MCF 10A (cell line): ENCODE measurements at regions of chr7 and their contacts with region 1.

Region 1: DNA sequence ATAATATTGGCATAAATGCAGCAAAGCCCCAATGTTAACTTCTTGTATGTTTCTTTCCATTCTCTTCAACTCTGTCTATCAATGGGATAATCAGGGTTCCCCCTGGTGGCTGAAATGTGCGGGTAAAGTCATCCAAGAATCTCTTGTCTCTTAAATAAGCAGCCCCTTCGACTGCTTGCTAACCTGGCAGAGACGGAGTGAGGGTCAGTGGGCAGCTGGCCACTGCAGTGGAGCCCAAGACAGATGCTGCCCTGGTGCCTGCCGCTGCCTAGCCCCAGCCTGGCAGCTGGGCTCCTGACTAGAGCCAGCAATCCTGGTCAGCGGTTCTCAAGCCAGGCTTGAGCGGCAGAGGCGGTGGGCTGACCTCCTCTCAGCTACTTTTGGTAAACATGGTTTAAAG is 248.9 kb downstream of the COBL start:
- DNase-seq: peak; percentile 75
- H3K4me3 Mint-ChIP-seq: no peak overlapping the region
- H3K27ac Mint-ChIP-seq: no peak overlapping the region
- H3K4me1 Mint-ChIP-seq: peaks cover 11% of the 10 kb centered on the region
- H3K27me3 Mint-ChIP-seq: no peaks in the 10 kb centered on the region
- CTCF ChIP-seq: peak; percentile 52

Region 2: GRCh38 chr7:50293509-50294179 is 774.1 kb before region 1 on chr7:
- CTCF ChIA-PET with region 1: no interaction called
- POLR2A ChIA-PET with region 1: no interaction called
- intact Hi-C with region 1: no loop called
- DNase-seq: no peak
- H3K4me3 Mint-ChIP-seq: no peak overlapping the region
- H3K27ac Mint-ChIP-seq: no peak overlapping the region
- H3K4me1 Mint-ChIP-seq: no peaks in the 10 kb centered on the region
- H3K27me3 Mint-ChIP-seq: peaks cover 58% of the 10 kb centered on the region
- CTCF ChIP-seq: no peak

Region 3: GRCh38 chr7:50782384-50783208 is 285.2 kb before region 1 on chr7 and contains the start of gene GRB10:
- CTCF ChIA-PET with region 1: interaction called, 4 read pairs
- POLR2A ChIA-PET with region 1: no interaction called
- intact Hi-C with region 1: loop called (anchors 2 kb)
- DNase-seq: no peak
- H3K4me3 Mint-ChIP-seq: peak within 1 kb of the TSS; percentile 20
- H3K27ac Mint-ChIP-seq: no peak within 1 kb of the TSS
- H3K4me1 Mint-ChIP-seq: peaks cover 9% of the 10 kb centered on the region
- H3K27me3 Mint-ChIP-seq: no peaks in the 10 kb centered on the region
- CTCF ChIP-seq: peak; percentile 33
- total RNA-seq, gene GRB10: 68.2 and 71.3 TPM in 2 replicates

Region 4: GRCh38 chr7:50793115-50793946 is 274.4 kb before region 1 on chr7:
- CTCF ChIA-PET with region 1: interaction called, 14 read pairs
- POLR2A ChIA-PET with region 1: no interaction called
- intact Hi-C with region 1: loop called (anchors 2 kb)
- DNase-seq: peak; percentile 62
- H3K4me3 Mint-ChIP-seq: peak overlapping the region; percentile 54
- H3K27ac Mint-ChIP-seq: no peak overlapping the region
- H3K4me1 Mint-ChIP-seq: peaks cover 13% of the 10 kb centered on the region
- H3K27me3 Mint-ChIP-seq: no peaks in the 10 kb centered on the region
- CTCF ChIP-seq: no peak

Region 5: DNA sequence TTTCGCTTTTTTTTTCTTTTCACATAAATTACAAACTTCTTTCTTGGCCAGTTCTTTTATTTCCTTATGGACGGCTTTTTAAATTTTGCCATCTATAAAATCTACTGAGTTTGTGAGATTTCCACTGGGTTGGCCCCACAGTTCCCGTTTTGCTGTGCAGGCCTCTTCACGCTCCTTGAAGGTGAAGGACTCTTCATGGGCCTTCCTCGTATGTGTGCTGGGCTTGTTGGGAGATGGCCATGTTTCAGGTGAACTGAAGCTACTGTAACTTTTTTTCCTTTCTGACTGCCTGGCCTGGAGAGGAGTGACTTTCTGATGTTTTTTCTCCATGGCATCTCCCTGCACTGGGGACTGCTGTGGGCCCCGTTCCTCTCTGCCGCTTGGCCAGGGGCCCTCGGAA is 13.5 kb before region 1 on chr7:
- CTCF ChIA-PET with region 1: interaction called, 21 read pairs
- POLR2A ChIA-PET with region 1: no interaction called
- intact Hi-C with region 1: no loop called
- DNase-seq: no peak
- H3K4me3 Mint-ChIP-seq: no peak overlapping the region
- H3K27ac Mint-ChIP-seq: no peak overlapping the region
- H3K4me1 Mint-ChIP-seq: no peaks in the 10 kb centered on the region
- H3K27me3 Mint-ChIP-seq: peaks cover 18% of the 10 kb centered on the region
- CTCF ChIP-seq: no peak

Region 6: DNA sequence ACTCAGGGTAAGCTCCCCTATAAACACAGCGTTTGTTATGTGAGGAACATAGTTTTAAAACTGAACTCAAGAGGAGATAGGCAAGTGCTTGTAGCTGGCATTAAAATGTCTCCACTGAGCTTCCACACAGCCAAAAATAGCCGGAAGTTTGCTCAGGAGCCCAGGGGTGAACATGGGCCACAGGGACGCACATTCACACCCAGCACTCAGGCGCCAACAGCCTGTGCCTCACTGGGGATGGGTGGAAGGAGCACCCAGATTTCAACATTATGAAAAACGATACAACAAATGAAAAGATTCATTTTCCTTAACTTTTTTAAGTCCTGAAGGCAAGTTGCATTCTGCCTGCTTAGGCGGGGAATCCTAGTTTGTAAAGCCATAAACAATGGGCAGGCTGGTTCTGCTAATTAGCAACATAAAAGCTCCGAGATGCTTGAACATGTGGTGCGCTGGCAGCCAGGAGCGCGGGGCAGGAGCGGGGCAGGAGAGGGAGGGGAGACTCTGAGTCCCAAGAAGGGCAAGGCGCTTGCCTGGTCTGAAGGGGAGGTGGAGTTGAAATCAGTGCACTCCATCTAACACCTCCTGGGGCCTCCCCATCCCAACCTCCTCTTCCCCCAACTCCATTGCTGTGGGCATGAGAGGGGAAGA is 13.0 kb after region 1 on chr7:
- CTCF ChIA-PET with region 1: interaction called, 19 read pairs
- POLR2A ChIA-PET with region 1: no interaction called
- intact Hi-C with region 1: no loop called
- DNase-seq: no peak
- H3K4me3 Mint-ChIP-seq: no peak overlapping the region
- H3K27ac Mint-ChIP-seq: no peak overlapping the region
- H3K4me1 Mint-ChIP-seq: no peaks in the 10 kb centered on the region
- H3K27me3 Mint-ChIP-seq: no peaks in the 10 kb centered on the region
- CTCF ChIP-seq: no peak

Region 7: DNA sequence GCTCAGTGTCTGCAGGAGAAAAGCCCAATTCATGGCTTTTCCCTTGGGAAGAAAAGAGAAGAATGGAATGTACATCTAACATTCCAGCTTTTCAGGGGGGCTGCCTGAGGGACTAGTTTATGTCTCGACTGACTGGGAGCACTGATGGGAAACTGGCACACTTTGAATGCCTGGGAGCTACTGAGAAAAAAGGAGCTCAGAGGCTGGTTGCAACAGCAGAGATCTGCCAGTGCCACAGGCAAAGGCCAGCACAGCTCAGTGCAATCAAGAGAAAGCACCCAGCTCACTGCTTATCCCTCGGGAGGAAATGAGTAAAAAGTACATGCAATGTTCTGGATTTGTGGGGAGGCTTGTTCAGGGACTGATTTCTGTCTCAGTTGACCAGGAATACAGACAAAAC is 22.7 kb after region 1 on chr7:
- CTCF ChIA-PET with region 1: interaction called, 22 read pairs
- POLR2A ChIA-PET with region 1: no interaction called
- intact Hi-C with region 1: no loop called
- DNase-seq: no peak
- H3K4me3 Mint-ChIP-seq: no peak overlapping the region
- H3K27ac Mint-ChIP-seq: no peak overlapping the region
- H3K4me1 Mint-ChIP-seq: peaks cover 5% of the 10 kb centered on the region
- H3K27me3 Mint-ChIP-seq: no peaks in the 10 kb centered on the region
- CTCF ChIP-seq: no peak

Region 8: DNA sequence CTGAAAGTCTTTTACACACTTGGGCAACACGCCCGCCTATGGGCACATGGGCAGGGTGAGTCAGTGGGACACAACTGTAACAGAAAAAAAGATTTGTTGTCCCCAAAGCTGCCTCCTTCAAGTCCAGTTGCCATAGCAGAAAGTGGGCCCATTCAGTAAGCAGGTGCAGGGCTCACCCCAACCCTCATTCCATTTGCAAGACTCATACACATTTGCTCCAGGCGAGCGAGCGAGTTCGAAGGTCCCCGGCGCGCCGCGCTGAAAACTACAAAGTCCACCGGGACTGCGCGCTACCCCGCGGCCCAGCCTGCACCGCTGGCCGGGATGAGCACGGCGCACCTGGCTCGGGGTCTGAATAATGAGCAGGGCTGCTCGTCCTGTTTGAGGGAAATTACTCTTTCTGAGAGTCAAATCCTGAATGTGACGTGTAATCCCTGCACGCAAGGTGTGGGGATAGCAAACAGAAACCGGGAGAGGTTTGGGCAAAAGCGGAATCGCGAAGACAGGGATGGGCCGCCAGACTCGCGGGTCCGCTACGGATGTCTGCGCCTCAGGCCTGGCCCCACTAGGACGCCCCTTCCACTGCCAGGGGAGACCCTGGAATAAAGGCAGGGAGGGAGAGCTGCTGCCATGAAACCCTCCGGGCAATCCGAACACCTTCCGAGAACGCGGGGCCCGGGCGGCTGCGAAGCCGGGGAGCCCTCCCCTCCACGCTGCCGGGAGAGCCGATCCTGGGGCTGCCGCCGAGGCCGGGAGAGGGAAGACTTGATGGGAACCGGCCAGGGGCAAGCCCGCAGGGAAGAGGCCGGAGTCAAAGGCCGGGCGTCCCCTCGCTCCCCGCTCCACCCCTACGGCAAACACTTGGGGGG is 247.9 kb after region 1 on chr7:
- CTCF ChIA-PET with region 1: no interaction called
- POLR2A ChIA-PET with region 1: no interaction called
- intact Hi-C with region 1: no loop called
- DNase-seq: peak; percentile 67
- H3K4me3 Mint-ChIP-seq: peak overlapping the region; percentile 85
- H3K27ac Mint-ChIP-seq: peak overlapping the region; percentile 92
- H3K4me1 Mint-ChIP-seq: peaks cover 11% of the 10 kb centered on the region
- H3K27me3 Mint-ChIP-seq: no peaks in the 10 kb centered on the region
- CTCF ChIP-seq: no peak